ENCODE measurements at regions of chr17 and their contacts with region 1.

Region 1: GRCh38 chr17:39244600-39245570 is 19.1 kb upstream of the STAC2 start:
- DNase-seq: peak; percentile 84 to 87
- H3K4me3 ChIP-seq: no peak overlapping the region
- H3K27ac ChIP-seq: peak overlapping the region in 1 of 2 donors; percentile 52
- H3K4me1 ChIP-seq: no peaks in the 10 kb centered on the region
- H3K27me3 ChIP-seq: no peaks in the 10 kb centered on the region
- CTCF ChIP-seq: peak; percentile 91 to 93 (median 92)
- POLR2A ChIP-seq: no peak

Region 2: GRCh38 chr17:39800540-39800939 is 555.7 kb after region 1 on chr17:
- intact Hi-C with region 1: no loop called
- DNase-seq: no peak
- H3K4me3 ChIP-seq: no peak overlapping the region
- H3K27ac ChIP-seq: no peak overlapping the region
- H3K4me1 ChIP-seq: no peaks in the 10 kb centered on the region
- H3K27me3 ChIP-seq: no peaks in the 10 kb centered on the region
- CTCF ChIP-seq: no peak
- POLR2A ChIP-seq: no peak

Region 3: DNA sequence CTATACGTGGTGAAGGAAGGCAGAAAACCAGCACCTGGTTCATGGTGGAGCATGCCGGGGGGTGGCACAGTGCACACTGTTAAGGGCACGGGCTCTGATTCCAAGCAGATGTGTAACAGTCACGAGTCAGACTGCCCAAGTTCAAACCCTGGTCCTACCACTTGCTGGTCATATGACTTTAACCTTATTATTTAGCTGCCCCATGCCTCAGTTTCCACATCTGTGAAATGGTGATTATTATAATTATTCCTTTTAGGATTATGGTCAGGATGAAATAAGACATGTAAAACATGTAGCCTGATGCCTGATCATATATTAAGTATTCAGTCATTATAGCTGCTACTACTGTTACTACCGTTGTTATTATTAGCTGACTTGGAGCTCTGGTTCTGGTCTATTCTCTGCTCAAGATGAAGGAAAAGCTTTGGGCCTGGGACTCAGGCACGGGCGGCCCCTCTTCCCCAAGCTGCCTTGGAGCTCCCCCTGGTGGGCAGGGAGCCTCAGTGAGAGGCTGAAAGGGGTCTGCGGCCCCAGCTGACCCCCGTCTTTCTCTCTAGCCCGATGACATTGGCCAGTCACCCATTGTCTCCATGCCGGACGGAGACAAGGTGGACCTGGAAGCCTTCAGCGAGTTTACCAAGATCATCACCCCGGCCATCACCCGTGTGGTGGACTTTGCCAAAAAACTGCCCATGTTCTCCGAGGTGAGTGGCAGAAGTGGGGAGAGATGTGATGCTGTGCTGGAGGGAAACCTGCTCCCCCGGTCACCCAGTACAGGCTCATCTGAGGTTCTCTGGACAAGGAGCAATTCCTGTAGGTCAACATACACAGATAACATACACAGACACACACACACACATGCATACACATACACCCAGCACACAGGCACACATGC is 841.5 kb after region 1 on chr17:
- intact Hi-C with region 1: loop called (anchors 5 kb)
- DNase-seq: no peak
- H3K4me3 ChIP-seq: no peak overlapping the region
- H3K27ac ChIP-seq: peak overlapping the region; percentile 26 to 57
- H3K4me1 ChIP-seq: no peaks in the 10 kb centered on the region
- H3K27me3 ChIP-seq: no peaks in the 10 kb centered on the region
- CTCF ChIP-seq: peak; percentile 72 to 87 (median 83)
- POLR2A ChIP-seq: no peak